ENCODE measurements at regions of chr7 and their contacts with region 1.

Region 1: DNA sequence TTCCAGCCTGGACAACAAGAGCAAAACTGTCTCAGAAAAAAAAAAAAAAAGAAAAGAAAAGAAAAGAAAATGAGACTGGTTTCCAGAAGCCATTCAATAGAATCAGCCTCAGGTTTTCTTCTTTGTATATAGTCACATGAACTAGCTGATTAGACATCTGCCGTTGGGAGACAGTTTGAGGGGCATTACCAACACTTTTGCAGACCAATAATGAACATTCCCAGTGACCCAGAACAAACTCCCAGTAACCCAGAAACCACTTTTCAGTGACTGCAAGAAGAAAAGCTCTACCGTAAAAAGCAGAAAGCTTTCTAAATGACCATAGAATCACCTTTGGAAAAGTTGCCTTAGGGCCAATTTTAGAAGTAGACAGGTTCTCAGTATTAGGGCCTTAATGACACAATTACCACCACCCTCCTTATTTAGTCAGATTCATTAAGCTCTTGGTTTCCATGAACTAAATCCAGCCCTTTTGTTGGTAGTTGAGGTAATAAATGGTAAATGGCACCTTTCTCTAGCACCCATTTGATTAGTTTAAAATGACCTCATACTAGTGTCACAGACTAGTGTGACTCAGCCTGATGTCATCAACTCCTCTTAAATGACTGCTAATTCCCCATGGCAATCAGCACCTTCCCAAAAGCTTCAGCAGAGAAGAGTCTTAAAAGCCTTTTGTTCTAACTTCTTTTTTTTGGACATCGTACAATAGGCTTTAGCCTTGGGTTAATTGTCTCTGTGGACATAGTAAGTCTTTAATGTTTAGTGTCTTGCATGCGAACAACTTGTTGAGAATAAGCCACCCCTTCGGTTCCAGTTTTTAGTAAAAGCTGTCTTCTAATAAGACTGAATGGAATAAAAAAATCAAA is 33.6 kb upstream of the XRCC2 start:
- DNase-seq: peak; percentile 16
- ATAC-seq: no peak
- H3K4me3 ChIP-seq: no peak overlapping the region
- H3K27ac ChIP-seq: no peak overlapping the region
- H3K4me1 ChIP-seq: no peaks in the 10 kb centered on the region
- H3K27me3 ChIP-seq: no peaks in the 10 kb centered on the region
- CTCF ChIP-seq: no peak
- POLR2A ChIP-seq: no peak
- RAD21 ChIP-seq: no peak

Region 2: GRCh38 chr7:152189061-152189460 is 520.5 kb before region 1 on chr7:
- CTCF ChIA-PET with region 1: no interaction called
- POLR2A ChIA-PET with region 1: no interaction called
- dilution Hi-C with region 1: no loop called
- in situ Hi-C with region 1: no loop called
- intact Hi-C with region 1: loop called (anchors 5 kb)
- DNase-seq: no peak
- ATAC-seq: no peak
- H3K4me3 ChIP-seq: no peak overlapping the region
- H3K27ac ChIP-seq: no peak overlapping the region
- H3K4me1 ChIP-seq: peaks cover 2% of the 10 kb centered on the region; the same call in 1 of the 2 replicates
- H3K27me3 ChIP-seq: no peaks in the 10 kb centered on the region
- CTCF ChIP-seq: no peak
- POLR2A ChIP-seq: no peak
- RAD21 ChIP-seq: no peak

Region 3: GRCh38 chr7:152336754-152337368 is 372.7 kb before region 1 on chr7:
- CTCF ChIA-PET with region 1: no interaction called
- POLR2A ChIA-PET with region 1: no interaction called
- dilution Hi-C with region 1: no loop called
- in situ Hi-C with region 1: no loop called
- intact Hi-C with region 1: loop called (anchors 2 kb)
- DNase-seq: peak; percentile 48
- ATAC-seq: peak; percentile 78
- H3K4me3 ChIP-seq: no peak overlapping the region
- H3K27ac ChIP-seq: no peak overlapping the region
- H3K4me1 ChIP-seq: peaks cover 2% of the 10 kb centered on the region; the same call in 1 of the 2 replicates
- H3K27me3 ChIP-seq: no peaks in the 10 kb centered on the region
- CTCF ChIP-seq: peak; percentile 39
- POLR2A ChIP-seq: no peak
- RAD21 ChIP-seq: peak; percentile 50

Region 4: GRCh38 chr7:152463709-152464311 is 245.7 kb before region 1 on chr7:
- CTCF ChIA-PET with region 1: no interaction called
- POLR2A ChIA-PET with region 1: no interaction called
- dilution Hi-C with region 1: no loop called
- in situ Hi-C with region 1: no loop called
- intact Hi-C with region 1: loop called (anchors 10 kb)
- DNase-seq: peak; percentile 98
- ATAC-seq: peak; percentile 95
- H3K4me3 ChIP-seq: peak overlapping the region; percentile 91
- H3K27ac ChIP-seq: peak overlapping the region; percentile 91
- H3K4me1 ChIP-seq: no peaks in the 10 kb centered on the region; the same call in 1 of the 2 replicates
- H3K27me3 ChIP-seq: no peaks in the 10 kb centered on the region
- CTCF ChIP-seq: no peak
- POLR2A ChIP-seq: peak; percentile 54; the same call in 1 of the 2 replicates
- RAD21 ChIP-seq: no peak

Region 5: GRCh38 chr7:152608208-152608607 is 101.3 kb before region 1 on chr7:
- CTCF ChIA-PET with region 1: no interaction called
- POLR2A ChIA-PET with region 1: no interaction called
- dilution Hi-C with region 1: no loop called
- in situ Hi-C with region 1: no loop called
- intact Hi-C with region 1: no loop called
- DNase-seq: no peak
- ATAC-seq: no peak
- H3K4me3 ChIP-seq: no peak overlapping the region
- H3K27ac ChIP-seq: no peak overlapping the region
- H3K4me1 ChIP-seq: no peaks in the 10 kb centered on the region
- H3K27me3 ChIP-seq: no peaks in the 10 kb centered on the region; the same call in 1 of the 2 replicates
- CTCF ChIP-seq: no peak
- POLR2A ChIP-seq: no peak
- RAD21 ChIP-seq: no peak

Measured in IMR-90 (cell line).